ENCODE measurements at regions of chr1 and their contacts with region 1.

Region 1: DNA sequence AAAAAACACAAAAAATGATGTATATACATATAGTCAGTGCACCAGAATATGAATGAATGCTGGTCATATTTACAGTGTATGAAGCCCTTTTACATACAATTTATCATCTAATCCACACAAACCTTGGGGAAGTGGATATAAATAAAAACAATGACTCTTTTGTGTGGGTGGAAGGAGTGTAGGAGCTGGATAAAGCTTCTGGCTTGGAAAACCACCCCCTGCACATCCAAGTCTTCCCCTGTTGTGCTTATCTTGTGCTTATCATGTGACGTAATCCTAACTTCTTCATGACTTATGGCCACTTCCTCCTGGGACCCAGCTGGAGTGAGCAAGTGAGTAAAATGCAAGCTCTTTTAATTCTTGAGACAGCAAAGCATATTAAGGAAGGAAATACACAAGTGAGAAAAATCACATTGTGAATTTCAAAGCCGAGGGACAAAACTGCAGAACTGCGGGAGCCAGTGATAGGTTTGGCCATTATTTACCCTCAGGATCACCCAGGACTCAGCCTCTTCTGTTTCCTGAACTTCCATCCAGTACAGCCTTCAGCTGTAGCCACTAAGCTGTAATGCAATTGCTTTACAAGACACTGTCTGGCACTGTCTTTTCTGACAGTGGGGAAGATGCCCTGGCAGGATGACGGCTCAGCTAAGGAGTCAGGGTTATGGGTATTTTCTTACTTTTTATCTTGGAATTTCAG is 104.0 kb upstream of the PPM1J start:
- DNase-seq: peak; percentile 39
- H3K4me3 ChIP-seq: no peak overlapping the region
- H3K27ac ChIP-seq: no peak overlapping the region
- H3K27me3 ChIP-seq: no peaks in the 10 kb centered on the region
- CTCF ChIP-seq: no peak

Region 2: DNA sequence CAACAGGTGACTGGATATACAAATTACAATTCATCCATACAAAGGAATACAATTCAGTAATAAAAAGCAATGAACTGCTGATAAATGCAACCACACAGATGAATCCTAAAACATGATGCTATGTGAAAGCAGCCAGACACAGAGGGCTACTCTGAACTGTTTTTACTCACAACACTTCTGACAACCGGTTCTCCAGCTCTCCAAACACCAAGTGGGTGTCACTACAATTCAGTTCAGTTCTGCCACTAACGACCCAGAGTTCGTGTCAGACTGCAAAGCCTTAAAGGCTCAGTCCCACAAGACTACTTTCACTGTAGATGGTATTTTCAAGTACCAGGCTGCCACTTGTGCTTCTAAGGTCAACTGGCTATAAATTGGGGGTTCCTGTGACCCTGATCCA is 17.5 kb after region 1 on chr1:
- CTCF ChIA-PET with region 1: no interaction called
- POLR2A ChIA-PET with region 1: interaction called, 13 read pairs
- DNase-seq: no peak
- H3K4me3 ChIP-seq: no peak overlapping the region
- H3K27ac ChIP-seq: no peak overlapping the region
- H3K27me3 ChIP-seq: peaks cover 3% of the 10 kb centered on the region
- CTCF ChIP-seq: no peak